OCI-LY7 (cell line): ENCODE measurements at regions of chr5 and their contacts with region 1.

Region 1: GRCh38 chr5:116423587-116424257 is 150.9 kb downstream of the SEMA6A start:
- DNase-seq: no peak
- H3K4me3 ChIP-seq: no peak overlapping the region
- H3K27ac ChIP-seq: no peak overlapping the region
- H3K4me1 ChIP-seq: no peaks in the 10 kb centered on the region
- CTCF ChIP-seq: no peak

Region 2: DNA sequence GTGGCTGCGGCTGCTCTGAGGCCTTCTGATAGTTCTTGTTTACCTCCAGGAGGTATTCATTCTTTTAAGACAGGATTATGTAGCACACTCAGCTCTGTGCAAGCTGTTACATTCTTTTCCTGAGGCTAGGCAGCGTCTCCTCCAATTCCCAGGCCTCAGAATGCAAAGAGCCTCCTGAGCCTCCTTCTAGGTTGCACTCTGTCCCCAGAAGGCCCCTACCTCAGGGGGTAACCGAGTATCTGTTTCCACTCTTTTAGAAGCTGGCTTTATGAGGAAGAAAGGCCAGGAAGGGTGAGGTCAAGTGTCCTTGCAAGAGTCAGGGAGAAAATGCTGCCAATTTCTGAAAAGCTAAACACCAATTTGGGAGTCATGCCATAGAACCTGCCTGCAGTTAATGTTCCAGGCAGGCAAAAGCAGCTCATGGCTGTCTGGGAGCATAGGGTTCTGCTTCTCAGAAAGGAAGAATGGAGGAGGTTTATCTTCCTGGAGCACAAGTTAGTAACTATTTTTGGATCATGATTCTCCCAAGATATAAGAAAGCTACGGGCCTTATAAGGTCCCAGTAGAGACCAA is 28.0 kb before region 1 on chr5:
- CTCF ChIA-PET with region 1: no interaction called
- POLR2A ChIA-PET with region 1: interaction called, 12 read pairs
- intact Hi-C with region 1: no loop called
- DNase-seq: no peak
- H3K4me3 ChIP-seq: no peak overlapping the region
- H3K27ac ChIP-seq: no peak overlapping the region
- H3K4me1 ChIP-seq: no peaks in the 10 kb centered on the region
- CTCF ChIP-seq: no peak

Region 3: GRCh38 chr5:116554764-116555163 is 131.0 kb after region 1 on chr5:
- CTCF ChIA-PET with region 1: no interaction called
- POLR2A ChIA-PET with region 1: no interaction called
- intact Hi-C with region 1: no loop called
- DNase-seq: no peak
- H3K4me3 ChIP-seq: no peak overlapping the region
- H3K27ac ChIP-seq: no peak overlapping the region
- H3K4me1 ChIP-seq: no peaks in the 10 kb centered on the region
- CTCF ChIP-seq: no peak